Activated CD8-positive, alpha-beta T cell treated with anti-CD3 and anti-CD28 coated beads for 36 hours (primary cell): ENCODE measurements at regions of chr7 and their contacts with region 1.

Region 1: GRCh38 chr7:28921822-28922221 is 36.3 kb downstream of the TRIL start:
- DNase-seq: peak; percentile 53
- ATAC-seq: peak; percentile 85
- H3K4me3 Mint-ChIP-seq: no peak overlapping the region
- H3K27ac Mint-ChIP-seq: no peak overlapping the region
- H3K4me1 Mint-ChIP-seq: peaks cover 13% of the 10 kb centered on the region
- H3K27me3 Mint-ChIP-seq: peaks cover 5% of the 10 kb centered on the region
- CTCF ChIP-seq: peak; percentile 74

Region 2: DNA sequence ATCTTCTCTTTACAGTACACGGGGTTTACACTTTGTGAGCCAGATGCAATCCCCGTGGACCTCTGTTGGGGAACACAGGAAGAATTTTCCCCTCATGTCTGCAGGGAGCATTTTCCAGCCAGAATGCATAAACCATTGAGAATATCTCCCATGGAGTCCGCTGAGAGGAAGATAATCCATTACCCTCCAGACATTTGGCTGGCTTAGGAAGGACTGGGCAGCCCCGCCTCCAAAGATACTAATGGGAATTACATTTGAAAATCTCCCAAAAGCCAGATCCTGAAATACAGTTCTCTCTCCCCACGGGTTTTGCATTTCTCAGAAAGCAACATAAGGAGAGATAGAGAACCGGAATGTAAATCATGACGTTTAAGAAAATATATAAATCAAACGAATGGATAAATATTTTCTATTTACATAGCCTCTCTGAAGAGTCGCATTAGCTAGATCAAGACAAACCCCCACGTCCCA is 17.2 kb before region 1 on chr7:
- CTCF ChIA-PET with region 1: interaction called, 55 read pairs
- POLR2A ChIA-PET with region 1: no interaction called
- intact Hi-C with region 1: no loop called
- DNase-seq: no peak
- ATAC-seq: no peak
- H3K4me3 Mint-ChIP-seq: no peak overlapping the region
- H3K27ac Mint-ChIP-seq: no peak overlapping the region
- H3K4me1 Mint-ChIP-seq: no peaks in the 10 kb centered on the region
- H3K27me3 Mint-ChIP-seq: peaks cover 8% of the 10 kb centered on the region
- CTCF ChIP-seq: no peak

Region 3: DNA sequence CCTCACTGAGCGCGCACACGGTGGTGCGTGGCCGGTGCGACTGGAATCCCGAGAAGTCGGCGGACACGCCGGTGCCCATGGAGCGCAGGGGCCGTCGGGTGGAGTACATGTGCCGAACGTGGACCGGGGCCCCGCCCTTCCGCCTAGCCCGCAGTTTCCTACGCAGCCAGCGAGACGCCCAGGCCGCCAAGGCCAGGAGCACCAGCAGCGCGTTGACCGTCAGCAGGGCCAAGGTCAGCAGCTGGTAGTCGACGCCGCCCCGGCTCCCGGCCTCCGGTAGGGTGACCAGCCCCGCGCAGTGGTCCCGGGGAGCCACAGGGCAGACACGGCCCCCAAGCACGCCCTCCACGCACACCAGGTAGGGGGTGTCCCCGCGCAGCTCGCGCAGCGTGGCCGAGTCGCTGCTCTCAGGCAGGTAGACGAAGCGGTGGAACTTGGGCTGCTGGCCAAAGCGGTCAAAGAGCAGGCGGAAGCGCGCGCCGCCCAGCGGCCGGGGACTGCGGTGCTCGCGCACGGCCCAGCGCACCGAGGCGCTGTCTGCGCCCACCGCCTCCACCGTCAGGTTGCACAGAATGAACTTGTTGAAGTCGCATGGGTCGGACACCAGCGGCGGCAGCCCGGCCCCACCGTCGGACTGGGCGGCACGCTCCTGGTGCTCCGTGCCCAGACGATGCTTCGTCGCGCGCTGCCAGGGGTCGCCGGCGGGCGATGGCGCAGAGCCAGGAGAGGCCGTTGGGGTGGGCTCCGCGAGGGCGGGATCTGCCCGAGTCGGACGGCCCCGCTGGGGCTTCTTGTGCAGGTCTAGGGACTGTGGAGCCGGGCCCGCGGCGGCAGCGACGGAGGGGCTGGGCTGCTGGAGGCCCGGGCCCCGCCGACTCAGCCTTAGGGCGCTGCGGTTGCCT is 34.1 kb after region 1 on chr7:
- CTCF ChIA-PET with region 1: interaction called, 58 read pairs
- POLR2A ChIA-PET with region 1: no interaction called
- intact Hi-C with region 1: no loop called
- DNase-seq: peak; percentile 49
- ATAC-seq: peak; percentile 45
- H3K4me3 Mint-ChIP-seq: no peak overlapping the region
- H3K27ac Mint-ChIP-seq: no peak overlapping the region
- H3K4me1 Mint-ChIP-seq: peaks cover 9% of the 10 kb centered on the region
- H3K27me3 Mint-ChIP-seq: peaks cover 58% of the 10 kb centered on the region
- CTCF ChIP-seq: peak; percentile 44

Region 4: DNA sequence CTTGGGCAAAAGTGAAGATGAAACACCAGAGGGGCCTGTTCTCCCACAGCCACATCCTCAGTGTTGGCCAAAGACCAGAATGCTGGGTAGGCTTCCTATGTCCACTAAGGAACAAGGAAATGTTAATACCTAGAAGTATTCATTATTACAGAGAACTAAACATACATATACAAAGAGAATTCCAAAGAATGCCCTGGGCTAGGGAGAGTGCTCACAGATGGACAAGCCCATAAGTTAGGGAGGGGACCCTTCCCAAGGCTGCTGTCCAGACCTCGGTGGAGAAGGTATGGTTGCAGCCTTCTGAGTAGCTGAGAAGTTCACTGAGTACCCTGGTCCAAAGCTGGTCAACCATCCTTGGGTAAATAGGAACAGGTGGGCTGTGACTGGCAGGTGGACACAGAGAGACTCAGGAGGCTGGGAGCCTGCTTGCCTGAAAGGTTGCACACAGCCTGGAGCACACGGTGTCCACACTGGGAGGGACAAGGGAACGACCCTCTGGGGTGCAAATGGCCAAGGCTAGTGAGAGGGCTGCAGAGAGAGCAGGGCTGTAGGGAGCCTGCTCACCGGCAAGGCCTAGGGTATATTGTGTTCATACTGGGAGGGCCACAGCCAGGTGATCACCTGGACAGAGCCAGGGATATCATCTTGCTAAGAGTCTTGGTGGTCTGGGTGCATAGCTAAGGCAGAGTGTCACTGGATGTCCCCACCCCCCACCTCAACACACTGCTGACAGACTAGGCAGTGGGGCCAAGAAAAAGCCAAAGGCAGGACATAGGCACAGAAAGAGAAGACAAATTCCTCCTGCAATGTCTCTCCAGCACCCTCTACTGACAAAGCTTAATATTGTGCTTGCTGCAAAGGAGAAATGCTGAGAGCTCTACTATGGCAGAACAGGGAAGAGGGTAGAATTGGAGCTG is 184.2 kb after region 1 on chr7:
- CTCF ChIA-PET with region 1: interaction called, 331 read pairs
- POLR2A ChIA-PET with region 1: no interaction called
- intact Hi-C with region 1: loop called (anchors 2 kb)
- DNase-seq: peak; percentile 22
- ATAC-seq: peak; percentile 82
- H3K4me3 Mint-ChIP-seq: no peak overlapping the region
- H3K27ac Mint-ChIP-seq: no peak overlapping the region
- H3K4me1 Mint-ChIP-seq: no peaks in the 10 kb centered on the region
- H3K27me3 Mint-ChIP-seq: no peaks in the 10 kb centered on the region
- CTCF ChIP-seq: peak; percentile 70

Region 5: GRCh38 chr7:29156907-29157452 is 235.2 kb after region 1 on chr7:
- CTCF ChIA-PET with region 1: interaction called, 21 read pairs
- POLR2A ChIA-PET with region 1: no interaction called
- intact Hi-C with region 1: no loop called
- DNase-seq: peak; percentile 6
- ATAC-seq: peak; percentile 24
- H3K4me3 Mint-ChIP-seq: peak overlapping the region; percentile 9
- H3K27ac Mint-ChIP-seq: no peak overlapping the region
- H3K4me1 Mint-ChIP-seq: peaks cover 10% of the 10 kb centered on the region
- H3K27me3 Mint-ChIP-seq: peaks cover 7% of the 10 kb centered on the region
- CTCF ChIP-seq: peak; percentile 11

Region 6: GRCh38 chr7:29408841-29409243 is 487.0 kb after region 1 on chr7:
- CTCF ChIA-PET with region 1: interaction called, 172 read pairs
- POLR2A ChIA-PET with region 1: no interaction called
- intact Hi-C with region 1: loop called (anchors 2 kb)
- DNase-seq: peak; percentile 62
- ATAC-seq: peak; percentile 67
- H3K4me3 Mint-ChIP-seq: no peak overlapping the region
- H3K27ac Mint-ChIP-seq: no peak overlapping the region
- H3K4me1 Mint-ChIP-seq: no peaks in the 10 kb centered on the region
- H3K27me3 Mint-ChIP-seq: no peaks in the 10 kb centered on the region
- CTCF ChIP-seq: peak; percentile 83